ENCODE measurements at regions of chr3 and their contacts with region 1.

Region 1: GRCh38 chr3:31880020-31880419 is 101.0 kb downstream of the OSBPL10 start:
- DNase-seq: peak; percentile 95
- H3K4me3 Mint-ChIP-seq: peak overlapping the region; percentile 30
- H3K27ac Mint-ChIP-seq: peak overlapping the region; percentile 44
- H3K4me1 Mint-ChIP-seq: peaks cover 56% of the 10 kb centered on the region
- H3K27me3 Mint-ChIP-seq: no peaks in the 10 kb centered on the region
- CTCF ChIP-seq: peak; percentile 35

Region 2: GRCh38 chr3:31772272-31772671 is 107.7 kb before region 1 on chr3:
- CTCF ChIA-PET with region 1: no interaction called
- POLR2A ChIA-PET with region 1: no interaction called
- intact Hi-C with region 1: no loop called
- DNase-seq: no peak
- H3K4me3 Mint-ChIP-seq: no peak overlapping the region
- H3K27ac Mint-ChIP-seq: no peak overlapping the region
- H3K4me1 Mint-ChIP-seq: peaks cover 42% of the 10 kb centered on the region
- H3K27me3 Mint-ChIP-seq: no peaks in the 10 kb centered on the region
- CTCF ChIP-seq: no peak

Region 3: DNA sequence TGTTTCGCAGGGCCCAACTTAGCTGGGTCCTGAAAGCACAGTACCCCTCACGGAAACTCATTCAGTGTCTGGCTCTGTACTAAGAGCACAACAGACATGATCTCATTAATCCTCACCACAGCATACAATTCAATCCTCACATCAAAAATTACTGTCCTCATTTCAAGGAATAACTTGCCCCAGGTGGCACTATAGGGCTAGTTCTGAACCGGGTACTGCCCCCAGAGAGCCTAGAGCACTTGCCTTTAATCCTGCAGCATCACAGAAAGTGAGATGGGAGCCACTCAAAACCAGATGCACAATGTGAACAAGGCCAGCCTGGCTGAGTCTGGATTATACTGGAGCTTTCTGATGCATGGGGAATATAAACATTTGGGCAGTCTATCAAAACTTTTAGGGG is 21.6 kb before region 1 on chr3:
- CTCF ChIA-PET with region 1: interaction called, 3 read pairs
- POLR2A ChIA-PET with region 1: interaction called, 10 read pairs
- intact Hi-C with region 1: no loop called
- DNase-seq: peak; percentile 45
- H3K4me3 Mint-ChIP-seq: no peak overlapping the region
- H3K27ac Mint-ChIP-seq: no peak overlapping the region
- H3K4me1 Mint-ChIP-seq: peaks cover 19% of the 10 kb centered on the region
- H3K27me3 Mint-ChIP-seq: no peaks in the 10 kb centered on the region
- CTCF ChIP-seq: no peak

Region 4: GRCh38 chr3:31960793-31961431 is 80.9 kb after region 1 on chr3:
- CTCF ChIA-PET with region 1: interaction called, 3 read pairs
- POLR2A ChIA-PET with region 1: interaction called, 53 read pairs
- intact Hi-C with region 1: no loop called
- DNase-seq: peak; percentile 64
- H3K4me3 Mint-ChIP-seq: peak overlapping the region; percentile 70
- H3K27ac Mint-ChIP-seq: peak overlapping the region; percentile 91
- H3K4me1 Mint-ChIP-seq: peaks cover 43% of the 10 kb centered on the region
- H3K27me3 Mint-ChIP-seq: no peaks in the 10 kb centered on the region
- CTCF ChIP-seq: no peak

Region 5: DNA sequence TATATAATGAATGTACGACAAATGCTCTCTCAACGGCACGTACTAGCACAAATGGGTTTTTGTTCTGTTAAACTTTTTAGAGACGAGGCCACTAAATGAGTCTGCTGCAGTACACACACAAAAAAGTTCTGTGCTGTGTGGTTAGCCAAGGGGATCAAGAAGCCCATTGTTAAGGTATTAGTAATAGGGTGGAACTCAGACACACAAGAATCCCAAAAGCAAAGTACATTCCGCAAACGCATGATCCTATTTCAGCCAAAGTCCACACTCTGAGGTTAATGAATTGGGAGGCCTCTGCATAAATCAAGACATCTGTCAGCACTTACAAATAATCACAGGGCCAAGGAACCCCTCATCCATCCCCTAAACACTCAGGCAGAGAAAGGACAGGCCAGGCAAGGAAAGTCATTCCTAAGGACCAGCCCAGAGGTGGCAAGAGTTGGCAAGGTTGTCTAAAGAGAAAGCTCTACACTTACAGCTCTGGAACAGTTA is 89.0 kb after region 1 on chr3:
- CTCF ChIA-PET with region 1: interaction called, 4 read pairs
- POLR2A ChIA-PET with region 1: interaction called, 53 read pairs
- intact Hi-C with region 1: loop called (anchors 1 kb)
- DNase-seq: peak; percentile 86
- H3K4me3 Mint-ChIP-seq: peak overlapping the region; percentile 69
- H3K27ac Mint-ChIP-seq: peak overlapping the region; percentile 99
- H3K4me1 Mint-ChIP-seq: peaks cover 32% of the 10 kb centered on the region
- H3K27me3 Mint-ChIP-seq: no peaks in the 10 kb centered on the region
- CTCF ChIP-seq: no peak

Region 6: DNA sequence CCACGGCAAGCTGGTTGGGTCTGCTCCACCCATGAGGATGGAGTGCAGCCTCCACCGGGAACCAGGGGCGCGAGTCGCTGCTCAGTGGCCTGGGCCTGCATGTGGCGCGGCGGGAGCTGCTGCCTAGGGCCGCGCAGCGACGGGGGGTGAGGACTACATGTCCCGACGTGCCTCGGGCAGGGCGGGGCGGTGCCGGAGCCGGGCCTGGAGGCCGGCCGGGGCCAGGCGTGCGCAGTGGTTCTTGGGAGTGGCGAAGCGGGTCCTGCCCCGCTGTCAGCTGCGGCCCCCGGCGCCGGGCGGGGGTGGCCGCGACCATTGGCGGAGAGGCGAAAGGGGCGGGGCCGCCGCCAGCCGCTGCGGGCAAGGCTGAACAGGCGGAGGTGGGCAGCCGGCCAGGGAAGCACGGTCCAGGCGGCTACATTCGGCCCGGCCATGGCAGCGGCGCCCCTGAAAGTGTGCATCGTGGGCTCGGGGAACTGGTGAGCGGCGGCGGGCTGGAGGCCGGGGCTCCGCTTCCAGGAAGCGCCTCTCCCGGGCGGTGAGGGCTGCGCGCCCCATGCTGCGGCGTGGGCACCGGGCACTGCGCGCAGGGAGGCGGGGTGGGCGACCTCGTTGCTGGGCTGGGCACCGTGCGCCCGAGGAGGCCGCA is 226.4 kb after region 1 on chr3 and contains the start of gene GPD1L:
- CTCF ChIA-PET with region 1: no interaction called
- POLR2A ChIA-PET with region 1: no interaction called
- intact Hi-C with region 1: loop called (anchors 5 kb)
- DNase-seq: peak; percentile 95
- H3K4me3 Mint-ChIP-seq: peak within 1 kb of the TSS; percentile 77
- H3K27ac Mint-ChIP-seq: peak within 1 kb of the TSS; percentile 16
- H3K4me1 Mint-ChIP-seq: peaks cover 14% of the 10 kb centered on the region
- H3K27me3 Mint-ChIP-seq: no peaks in the 10 kb centered on the region
- CTCF ChIP-seq: no peak
- total RNA-seq, gene GPD1L: 8.5 and 9.7 TPM in 2 replicates

Region 7: GRCh38 chr3:32143849-32144757 is 264.1 kb after region 1 on chr3:
- CTCF ChIA-PET with region 1: no interaction called
- POLR2A ChIA-PET with region 1: no interaction called
- intact Hi-C with region 1: no loop called
- DNase-seq: peak; percentile 89
- H3K4me3 Mint-ChIP-seq: no peak overlapping the region
- H3K27ac Mint-ChIP-seq: no peak overlapping the region
- H3K4me1 Mint-ChIP-seq: peaks cover 6% of the 10 kb centered on the region
- H3K27me3 Mint-ChIP-seq: no peaks in the 10 kb centered on the region
- CTCF ChIP-seq: peak; percentile 57

Region 8: DNA sequence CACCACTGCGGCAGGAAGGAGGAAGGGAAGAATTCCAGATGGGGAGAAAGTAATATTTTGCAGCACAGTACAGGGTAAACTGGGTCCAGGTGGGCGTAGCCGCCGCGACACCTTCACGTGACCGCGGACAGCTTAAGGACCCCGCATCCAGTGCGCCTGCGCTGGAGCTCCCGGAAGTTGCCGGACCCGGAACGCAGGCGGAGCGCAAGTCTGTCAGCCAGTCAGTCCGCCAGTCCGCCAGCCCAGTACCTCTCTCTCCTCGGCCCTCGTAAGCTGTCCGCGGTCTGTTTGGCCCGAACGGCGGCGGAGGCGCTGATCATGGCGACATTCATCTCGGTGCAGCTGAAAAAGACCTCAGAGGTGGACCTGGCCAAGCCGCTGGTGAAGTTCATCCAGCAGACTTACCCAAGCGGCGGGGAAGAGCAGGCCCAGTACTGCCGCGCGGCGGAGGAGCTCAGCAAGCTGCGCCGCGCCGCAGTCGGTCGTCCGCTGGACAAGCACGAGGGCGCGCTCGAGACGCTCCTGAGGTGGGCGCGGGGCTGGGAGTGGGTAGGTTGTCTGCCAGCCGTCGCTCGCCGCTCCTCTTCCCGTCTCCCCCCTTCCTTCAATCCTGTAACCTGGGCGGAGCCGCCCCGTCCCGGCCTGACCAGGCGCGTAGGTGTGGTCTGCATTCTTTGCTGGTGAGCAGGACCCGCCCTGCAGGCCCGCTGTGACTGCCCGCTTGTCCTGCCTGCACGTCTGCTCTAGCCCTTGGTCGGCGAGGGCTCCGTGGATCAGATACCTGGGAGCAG is 1918.6 kb after region 1 on chr3 and contains the start of gene PDCD6IP:
- CTCF ChIA-PET with region 1: no interaction called
- POLR2A ChIA-PET with region 1: no interaction called
- intact Hi-C with region 1: no loop called
- DNase-seq: peak; percentile 92
- H3K4me3 Mint-ChIP-seq: peak within 1 kb of the TSS; percentile 90
- H3K27ac Mint-ChIP-seq: peak within 1 kb of the TSS; percentile 93
- H3K4me1 Mint-ChIP-seq: peaks cover 41% of the 10 kb centered on the region
- H3K27me3 Mint-ChIP-seq: no peaks in the 10 kb centered on the region
- CTCF ChIP-seq: no peak
- total RNA-seq, gene PDCD6IP: 286 and 304 TPM in 2 replicates